AG04449 (cell line): ENCODE measurements at regions of chr11 and their contacts with region 1.

Region 1: DNA sequence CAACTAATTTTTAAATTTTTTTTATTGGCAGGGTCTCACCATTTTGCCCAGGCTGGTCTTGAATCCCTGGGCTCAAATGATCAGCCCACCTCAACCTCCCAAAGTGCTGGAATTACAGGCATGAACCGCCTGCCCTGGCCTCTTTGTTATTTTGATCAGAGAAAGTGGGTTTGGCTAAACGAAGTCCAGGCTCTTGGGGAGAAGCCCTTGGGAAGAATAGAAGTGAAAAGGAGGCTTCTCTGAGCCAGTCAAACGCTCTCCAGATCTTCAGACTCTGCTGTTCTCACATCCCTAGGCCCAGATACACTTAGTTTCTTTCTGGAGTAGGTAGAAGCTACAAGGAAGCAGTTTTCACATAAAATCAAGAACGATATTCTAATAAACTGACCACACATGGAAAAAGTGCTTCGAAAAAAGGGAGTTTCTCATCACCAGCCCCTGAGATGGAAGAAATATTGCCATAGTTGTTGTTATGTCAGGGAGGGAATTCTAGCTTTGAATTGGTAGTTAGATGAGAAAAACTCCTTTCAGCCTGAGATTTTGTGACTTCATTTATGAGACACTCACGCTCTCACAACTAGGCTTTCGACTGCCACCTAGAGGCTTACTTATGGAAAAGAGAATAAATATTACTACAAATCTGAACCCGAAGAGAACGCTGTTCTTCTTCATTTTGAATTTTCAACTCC is 41.7 kb upstream of the AQP11 start:
- DNase-seq: peak; percentile 21
- H3K4me3 ChIP-seq: no peak overlapping the region
- CTCF ChIP-seq: peak; percentile 38

Region 2: GRCh38 chr11:77113382-77114088 is 434.5 kb before region 1 on chr11:
- CTCF ChIA-PET with region 1: interaction called, 14 read pairs
- POLR2A ChIA-PET with region 1: no interaction called
- DNase-seq: no peak
- H3K4me3 ChIP-seq: no peak overlapping the region
- CTCF ChIP-seq: peak; percentile 58

Region 3: DNA sequence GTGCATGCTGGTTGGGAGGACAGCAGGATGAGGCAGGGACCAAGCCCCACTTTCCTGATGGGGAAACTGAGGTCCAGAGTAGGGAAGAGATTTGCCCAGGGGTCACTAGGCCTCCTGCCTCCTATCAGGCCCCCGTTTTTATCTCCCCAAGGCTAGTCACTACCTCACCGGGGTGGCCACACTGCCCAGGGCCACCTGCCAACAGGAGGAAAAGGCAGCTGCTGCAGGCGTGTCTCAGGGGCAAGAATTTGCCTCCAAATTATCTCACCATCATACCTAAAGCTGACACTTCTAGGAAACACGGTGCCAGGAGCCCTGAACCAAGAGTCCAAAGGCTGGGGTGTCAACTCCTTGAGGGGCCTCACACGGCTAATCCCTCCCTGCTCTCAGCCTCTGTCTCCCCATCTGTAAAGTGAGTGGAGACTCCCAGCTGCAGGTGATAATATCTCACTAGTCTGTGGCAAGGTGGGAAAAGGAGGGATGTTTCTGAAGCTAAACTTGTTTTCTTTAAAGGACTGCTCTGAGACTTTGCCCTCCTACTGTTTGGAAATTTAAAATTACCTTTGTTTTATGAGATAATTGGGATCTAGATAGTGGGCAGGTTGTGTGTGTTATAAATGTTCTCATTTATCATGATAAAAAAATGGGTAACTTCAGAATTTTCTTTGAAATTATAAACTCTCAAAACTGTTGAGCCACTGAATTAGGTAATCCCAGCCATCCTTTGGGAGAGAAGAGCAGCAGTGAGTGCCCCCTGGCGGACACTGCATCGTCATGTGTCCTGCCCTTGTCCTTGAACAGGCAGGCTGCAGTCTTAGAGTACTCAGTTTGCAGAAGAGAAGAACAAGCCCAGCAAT is 360.0 kb before region 1 on chr11:
- CTCF ChIA-PET with region 1: interaction called, 71 read pairs
- POLR2A ChIA-PET with region 1: no interaction called
- DNase-seq: peak; percentile 21
- H3K4me3 ChIP-seq: no peak overlapping the region
- CTCF ChIP-seq: peak; percentile 86

Region 4: DNA sequence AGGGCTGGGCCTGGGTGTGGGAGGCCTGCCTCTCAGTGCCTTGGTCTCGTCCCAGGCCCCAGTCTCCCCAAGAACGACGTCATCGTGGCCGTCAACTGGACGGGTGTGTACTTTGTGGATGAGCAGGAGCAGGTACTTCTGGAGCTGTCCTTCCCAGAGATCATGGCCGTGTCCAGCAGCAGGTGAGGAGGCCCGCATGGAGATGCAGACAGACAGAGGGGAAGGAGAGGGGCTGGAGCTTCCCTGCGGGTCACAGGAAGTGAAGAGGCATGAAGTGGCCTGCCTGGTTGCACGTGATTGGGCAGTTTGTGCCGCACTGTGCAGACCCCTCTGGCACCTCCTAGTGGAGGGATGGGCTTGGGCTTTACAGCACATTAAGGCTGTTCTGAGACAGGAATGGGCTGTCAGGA is 349.6 kb before region 1 on chr11:
- CTCF ChIA-PET with region 1: interaction called, 170 read pairs
- POLR2A ChIA-PET with region 1: no interaction called
- DNase-seq: no peak
- H3K4me3 ChIP-seq: no peak overlapping the region
- CTCF ChIP-seq: peak; percentile 12

Region 5: DNA sequence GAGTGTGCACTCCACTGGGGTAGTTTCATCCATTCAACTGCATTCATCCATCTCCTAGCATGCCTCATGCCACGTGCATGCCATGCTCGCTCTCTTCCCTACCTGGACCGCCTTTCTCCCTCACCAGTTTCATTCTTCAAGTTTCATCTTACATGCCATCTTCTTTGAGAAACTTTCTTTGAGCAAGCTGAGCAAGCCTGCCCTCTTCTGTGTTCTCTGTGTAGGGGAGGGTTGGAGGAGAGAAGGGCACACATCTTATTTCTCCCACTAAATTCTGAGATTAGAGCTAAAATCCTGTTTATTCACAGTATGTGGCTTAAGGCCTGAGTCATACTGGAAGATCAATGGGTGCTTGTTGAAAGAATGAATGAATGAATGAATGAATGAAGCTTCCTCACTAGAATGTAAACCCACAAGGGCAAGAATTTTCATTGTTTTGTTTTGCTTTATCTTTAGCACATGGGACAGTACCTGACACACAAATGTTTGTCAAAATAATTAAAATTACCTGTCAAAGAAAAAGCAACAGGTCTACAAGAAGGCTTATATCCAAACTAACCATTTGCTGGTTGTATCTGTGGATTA is 23.6 kb before region 1 on chr11:
- CTCF ChIA-PET with region 1: interaction called, 13 read pairs
- POLR2A ChIA-PET with region 1: no interaction called
- DNase-seq: no peak
- H3K4me3 ChIP-seq: no peak overlapping the region
- CTCF ChIP-seq: no peak

Region 6: GRCh38 chr11:77637345-77638165 is 89.5 kb after region 1 on chr11 and contains the start of gene CLNS1A:
- CTCF ChIA-PET with region 1: no interaction called
- POLR2A ChIA-PET with region 1: no interaction called
- DNase-seq: peak; percentile 42
- H3K4me3 ChIP-seq: peak within 1 kb of the TSS; percentile 95
- CTCF ChIP-seq: no peak